RWPE1 (cell line): ENCODE measurements at regions of chr11 and their contacts with region 1.

Region 1: GRCh38 chr11:102256251-102256650 is 61.0 kb upstream of the BIRC3 start:
- DNase-seq: peak; percentile 97
- H3K27ac ChIP-seq: peak overlapping the region; percentile 93
- CTCF ChIP-seq: no peak

Region 2: GRCh38 chr11:102268329-102269193 is 12.3 kb after region 1 on chr11:
- CTCF ChIA-PET with region 1: interaction called, 11 read pairs
- POLR2A ChIA-PET with region 1: no interaction called
- DNase-seq: peak; percentile 99
- H3K27ac ChIP-seq: peak overlapping the region; percentile 96
- CTCF ChIP-seq: peak; percentile 78